ENCODE measurements at regions of chr5 and their contacts with region 1.

Region 1: GRCh38 chr5:68285851-68286611 is 70.5 kb downstream of the PIK3R1 start:
- DNase-seq: peak; percentile 39
- ATAC-seq: no peak
- H3K4me3 ChIP-seq: no peak overlapping the region
- H3K27ac ChIP-seq: no peak overlapping the region
- H3K4me1 ChIP-seq: no peaks in the 10 kb centered on the region
- H3K27me3 ChIP-seq: no peaks in the 10 kb centered on the region
- CTCF ChIP-seq: peak; percentile 57

Region 2: DNA sequence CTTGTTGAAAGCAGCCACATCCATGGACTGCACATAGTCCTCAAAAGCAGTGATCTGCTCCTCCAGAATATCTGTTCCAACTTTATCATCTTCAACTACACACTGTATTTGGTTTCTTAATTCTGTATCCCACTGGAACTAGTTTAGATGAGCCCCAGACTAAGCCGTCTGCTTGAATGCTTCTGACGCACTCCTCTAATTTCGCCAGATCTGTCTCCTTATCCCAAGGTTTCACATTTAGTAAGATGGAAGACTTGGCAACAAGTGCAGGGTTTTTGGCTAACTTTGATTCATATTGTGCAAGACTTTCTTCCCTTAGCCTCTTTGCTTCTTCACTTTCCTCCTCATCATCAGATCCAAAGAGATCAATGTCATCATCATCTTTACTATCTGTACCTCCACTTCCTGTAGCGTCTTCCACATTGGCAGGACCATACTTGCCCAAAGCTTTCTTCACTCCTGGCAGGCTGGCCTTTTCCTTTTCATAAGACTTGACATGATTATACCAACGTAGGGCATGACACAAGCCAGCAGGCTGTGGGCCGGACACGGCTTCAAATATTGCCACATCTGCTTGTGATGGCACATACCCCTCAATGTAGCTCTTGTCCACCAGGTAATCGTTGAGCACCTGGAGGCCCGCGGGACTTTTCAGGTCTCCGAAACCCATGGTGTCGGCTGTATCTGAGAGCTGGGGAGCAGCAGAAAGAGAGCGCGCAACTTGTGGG is 126.6 kb before region 1 on chr5:
- CTCF ChIA-PET with region 1: no interaction called
- POLR2A ChIA-PET with region 1: no interaction called
- intact Hi-C with region 1: no loop called
- DNase-seq: no peak
- ATAC-seq: no peak
- H3K4me3 ChIP-seq: no peak overlapping the region
- H3K27ac ChIP-seq: no peak overlapping the region
- H3K4me1 ChIP-seq: no peaks in the 10 kb centered on the region
- H3K27me3 ChIP-seq: no peaks in the 10 kb centered on the region
- CTCF ChIP-seq: no peak

Region 3: GRCh38 chr5:68460147-68460798 is 174.2 kb after region 1 on chr5:
- CTCF ChIA-PET with region 1: no interaction called
- POLR2A ChIA-PET with region 1: interaction called, 5 read pairs
- intact Hi-C with region 1: loop called (anchors 1 kb)
- DNase-seq: peak; percentile 46
- ATAC-seq: no peak
- H3K4me3 ChIP-seq: no peak overlapping the region
- H3K27ac ChIP-seq: no peak overlapping the region
- H3K4me1 ChIP-seq: peaks cover 19% of the 10 kb centered on the region; the same call in 1 of the 2 replicates
- H3K27me3 ChIP-seq: no peaks in the 10 kb centered on the region
- CTCF ChIP-seq: peak; percentile 53

Region 4: DNA sequence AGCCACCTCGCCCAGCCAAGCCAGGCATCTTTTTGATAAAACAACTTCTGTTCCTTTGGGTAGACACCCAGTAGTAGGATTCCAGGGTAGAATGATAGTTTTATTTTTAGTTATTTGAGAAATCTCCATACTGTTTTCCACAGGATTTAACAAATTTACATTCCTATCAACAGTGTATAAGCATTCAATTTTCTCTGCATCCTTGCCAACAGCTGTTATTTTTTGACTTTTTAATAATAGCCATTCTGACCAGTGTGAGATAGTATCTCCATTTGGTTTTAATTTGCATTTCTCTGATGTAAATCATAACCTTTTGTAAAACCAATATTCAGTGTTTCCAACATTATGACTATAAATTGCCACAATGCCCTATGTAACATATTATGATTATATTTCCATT is 852.7 kb after region 1 on chr5:
- CTCF ChIA-PET with region 1: no interaction called
- POLR2A ChIA-PET with region 1: no interaction called
- intact Hi-C with region 1: no loop called
- DNase-seq: no peak
- ATAC-seq: no peak
- H3K4me3 ChIP-seq: no peak overlapping the region
- H3K27ac ChIP-seq: no peak overlapping the region
- H3K4me1 ChIP-seq: no peaks in the 10 kb centered on the region
- H3K27me3 ChIP-seq: no peaks in the 10 kb centered on the region
- CTCF ChIP-seq: no peak